IMR-90 (cell line): ENCODE measurements at regions of chr17 and their contacts with region 1.

Region 1: DNA sequence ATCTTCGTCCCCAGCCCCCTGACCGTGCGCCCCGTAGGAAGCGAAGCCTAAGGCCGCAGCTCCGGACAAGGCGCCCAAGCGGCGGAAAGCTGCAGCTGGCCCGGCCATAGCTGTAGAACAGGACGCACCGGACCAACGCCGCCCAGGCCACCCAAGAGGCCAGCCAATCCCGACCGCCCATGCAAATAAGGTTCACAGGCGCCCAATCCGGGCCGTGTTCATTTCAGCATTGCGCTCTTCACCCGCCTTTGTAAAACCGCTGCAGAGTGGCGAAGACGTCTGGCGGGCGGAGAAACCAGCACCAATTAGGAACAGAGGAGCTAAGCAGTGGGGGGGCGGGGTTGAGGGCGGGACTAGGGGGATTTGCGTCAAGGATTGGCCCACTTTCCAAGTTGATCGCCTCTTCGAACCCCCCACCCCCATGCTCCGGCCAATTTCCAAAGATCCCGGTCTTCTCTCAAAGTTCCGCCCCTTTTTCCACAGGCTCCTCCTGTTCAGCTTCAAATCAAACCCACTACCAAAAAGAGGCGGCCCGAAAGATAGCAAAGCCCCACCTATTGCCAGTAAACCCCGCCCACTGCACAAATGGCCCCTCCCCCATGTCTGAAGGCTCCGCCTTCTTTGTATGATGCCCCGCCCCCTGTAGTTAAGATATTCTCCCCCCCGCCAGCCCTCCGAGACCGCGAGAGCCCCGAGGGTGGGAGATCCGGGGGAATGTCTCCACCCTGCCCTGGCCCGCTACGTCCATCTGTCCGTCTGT is at the start of gene TMEM256:
- DNase-seq: peak; percentile 99
- ATAC-seq: peak; percentile 80
- H3K4me3 ChIP-seq: peak within 1 kb of the TSS; percentile 94
- H3K27ac ChIP-seq: peak within 1 kb of the TSS; percentile 75
- H3K4me1 ChIP-seq: peaks cover 9% of the 10 kb centered on the region
- H3K27me3 ChIP-seq: no peaks in the 10 kb centered on the region
- CTCF ChIP-seq: no peak
- POLR2A ChIP-seq: peak; percentile 57; the same call in 1 of the 2 replicates
- RAD21 ChIP-seq: no peak
- total RNA-seq, gene TMEM256: 35.3 and 38.4 TPM in 2 replicates

Region 2: GRCh38 chr17:7435221-7435675 is 31.1 kb after region 1 on chr17 and contains the start of gene TMEM102:
- CTCF ChIA-PET with region 1: interaction called, 4 read pairs
- POLR2A ChIA-PET with region 1: interaction called, 8 read pairs
- dilution Hi-C with region 1: no loop called
- in situ Hi-C with region 1: no loop called
- intact Hi-C with region 1: loop called (anchors 2 kb)
- DNase-seq: peak; percentile 94
- ATAC-seq: peak; percentile 77
- H3K4me3 ChIP-seq: peak within 1 kb of the TSS; percentile 33
- H3K27ac ChIP-seq: no peak within 1 kb of the TSS
- H3K4me1 ChIP-seq: peaks cover 2% of the 10 kb centered on the region
- H3K27me3 ChIP-seq: peaks cover 25% of the 10 kb centered on the region
- CTCF ChIP-seq: no peak
- POLR2A ChIP-seq: no peak
- RAD21 ChIP-seq: no peak
- total RNA-seq, gene TMEM102: 1.1 and 1.4 TPM in 2 replicates

Region 3: GRCh38 chr17:7466639-7467341 is 62.6 kb after region 1 on chr17:
- CTCF ChIA-PET with region 1: no interaction called
- POLR2A ChIA-PET with region 1: no interaction called
- dilution Hi-C with region 1: no loop called
- in situ Hi-C with region 1: no loop called
- intact Hi-C with region 1: no loop called
- DNase-seq: peak; percentile 66
- ATAC-seq: peak; percentile 58
- H3K4me3 ChIP-seq: no peak overlapping the region
- H3K27ac ChIP-seq: no peak overlapping the region
- H3K4me1 ChIP-seq: peaks cover 12% of the 10 kb centered on the region; the same call in 1 of the 2 replicates
- H3K27me3 ChIP-seq: no peaks in the 10 kb centered on the region
- CTCF ChIP-seq: no peak
- POLR2A ChIP-seq: no peak
- RAD21 ChIP-seq: no peak

Region 4: DNA sequence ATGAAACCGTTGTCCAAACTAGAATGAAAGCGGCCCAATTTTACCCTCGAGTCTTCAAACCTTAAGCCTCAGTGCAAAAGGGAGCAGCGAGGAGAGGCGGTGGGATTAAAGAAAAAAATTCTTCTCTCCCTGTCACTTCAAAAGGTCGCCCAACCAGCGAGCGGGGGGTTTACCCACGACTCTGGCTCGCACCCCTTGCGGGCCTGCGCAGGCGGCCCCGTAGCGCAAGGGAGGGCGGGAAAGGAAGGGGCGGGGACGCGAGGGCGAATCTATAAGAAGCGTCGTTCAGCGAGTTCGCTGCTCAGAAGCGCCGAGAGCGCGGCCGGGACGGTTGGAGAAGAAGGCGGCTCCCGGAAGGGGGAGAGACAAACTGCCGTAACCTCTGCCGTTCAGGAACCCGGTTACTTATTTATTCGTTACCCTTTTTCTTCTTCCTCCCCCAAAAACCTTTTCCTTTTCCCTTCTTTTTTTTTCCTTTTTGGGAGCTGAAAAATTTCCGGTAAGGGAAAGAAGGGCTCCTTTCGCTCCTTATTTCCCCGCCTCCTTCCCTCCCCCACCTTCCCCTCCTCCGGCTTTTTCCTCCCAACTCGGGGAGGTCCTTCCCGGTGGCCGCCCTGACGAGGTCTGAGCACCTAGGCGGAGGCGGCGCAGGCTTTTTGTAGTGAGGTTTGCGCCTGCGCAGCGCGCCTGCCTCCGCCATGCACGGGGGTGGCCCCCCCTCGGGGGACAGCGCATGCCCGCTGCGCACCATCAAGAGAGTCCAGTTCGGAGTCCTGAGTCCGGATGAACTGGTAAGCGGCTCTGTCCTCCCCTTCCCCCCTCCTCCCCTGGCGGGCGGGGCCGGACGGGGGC is 80.1 kb after region 1 on chr17 and contains the start of gene POLR2A:
- CTCF ChIA-PET with region 1: no interaction called
- POLR2A ChIA-PET with region 1: interaction called, 3 read pairs
- dilution Hi-C with region 1: no loop called
- in situ Hi-C with region 1: no loop called
- intact Hi-C with region 1: loop called (anchors 1 kb)
- DNase-seq: peak; percentile 98
- ATAC-seq: peak; percentile 72
- H3K4me3 ChIP-seq: peak within 1 kb of the TSS; percentile 73
- H3K27ac ChIP-seq: peak within 1 kb of the TSS; percentile 99
- H3K4me1 ChIP-seq: peaks cover 14% of the 10 kb centered on the region
- H3K27me3 ChIP-seq: no peaks in the 10 kb centered on the region
- CTCF ChIP-seq: no peak
- POLR2A ChIP-seq: peak; percentile 100
- RAD21 ChIP-seq: no peak; the same call in 1 of the 2 replicates
- total RNA-seq, gene POLR2A: 56.4 and 56.6 TPM in 2 replicates